ENCODE measurements at regions of chr17 and their contacts with region 1.

Region 1: DNA sequence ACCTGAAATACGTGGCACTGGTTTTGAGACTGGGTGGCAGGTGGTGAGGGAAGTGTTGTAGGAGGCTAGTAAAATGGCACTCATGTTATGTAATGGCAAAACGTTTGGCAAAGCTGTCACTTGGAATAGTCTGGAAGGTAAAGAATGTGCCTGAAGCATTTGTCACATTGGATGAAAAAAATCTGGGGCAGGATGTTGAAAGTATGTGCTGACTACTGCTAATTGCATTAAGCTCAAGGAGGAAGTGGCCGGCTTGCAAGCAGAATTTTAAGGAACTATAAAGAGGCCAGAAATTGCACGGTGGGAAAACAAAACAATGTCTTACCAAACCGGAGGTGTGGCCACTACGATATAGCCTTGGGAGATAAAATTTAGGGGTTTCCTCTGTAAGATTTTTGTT is 26.6 kb upstream of the NLRP1 start:
- DNase-seq: no peak
- ATAC-seq: no peak
- H3K4me3 ChIP-seq: no peak overlapping the region
- H3K27ac ChIP-seq: no peak overlapping the region
- H3K4me1 ChIP-seq: no peaks in the 10 kb centered on the region
- H3K27me3 ChIP-seq: no peaks in the 10 kb centered on the region
- CTCF ChIP-seq: no peak
- EP300 ChIP-seq: no peak
- POLR2A ChIP-seq: no peak
- RAD21 ChIP-seq: no peak

Region 2: GRCh38 chr17:5405400-5405799 is 205.6 kb before region 1 on chr17:
- CTCF ChIA-PET with region 1: no interaction called
- POLR2A ChIA-PET with region 1: no interaction called
- in situ Hi-C with region 1: no loop called
- intact Hi-C with region 1: no loop called
- DNase-seq: no peak
- ATAC-seq: no peak
- H3K4me3 ChIP-seq: no peak overlapping the region
- H3K27ac ChIP-seq: no peak overlapping the region
- H3K4me1 ChIP-seq: no peaks in the 10 kb centered on the region
- H3K27me3 ChIP-seq: no peaks in the 10 kb centered on the region
- CTCF ChIP-seq: no peak
- EP300 ChIP-seq: no peak
- POLR2A ChIP-seq: no peak
- RAD21 ChIP-seq: no peak

Region 3: DNA sequence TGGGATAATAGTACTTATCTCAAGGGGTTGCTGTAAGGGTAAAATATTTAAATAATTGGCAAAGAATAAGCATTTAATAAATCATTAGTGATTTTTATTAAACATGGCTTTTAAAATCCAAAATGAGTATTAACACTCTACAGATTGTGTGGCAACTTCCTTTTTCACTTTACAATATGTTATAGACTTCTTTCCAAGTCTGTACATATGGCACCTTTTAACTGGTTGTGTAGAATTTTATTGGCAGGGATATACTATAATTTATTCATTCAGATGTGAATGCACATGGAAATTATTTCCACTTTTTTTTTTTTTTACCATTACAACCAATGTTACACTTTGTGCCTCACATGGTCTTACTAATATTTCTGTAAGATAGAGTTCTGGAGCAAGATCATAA is 10.9 kb before region 1 on chr17:
- CTCF ChIA-PET with region 1: no interaction called
- POLR2A ChIA-PET with region 1: interaction called, 23 read pairs
- in situ Hi-C with region 1: no loop called
- intact Hi-C with region 1: no loop called
- DNase-seq: no peak
- ATAC-seq: no peak
- H3K4me3 ChIP-seq: no peak overlapping the region
- H3K27ac ChIP-seq: no peak overlapping the region
- H3K4me1 ChIP-seq: no peaks in the 10 kb centered on the region
- H3K27me3 ChIP-seq: no peaks in the 10 kb centered on the region
- CTCF ChIP-seq: no peak
- EP300 ChIP-seq: no peak
- POLR2A ChIP-seq: no peak
- RAD21 ChIP-seq: no peak

Region 4: DNA sequence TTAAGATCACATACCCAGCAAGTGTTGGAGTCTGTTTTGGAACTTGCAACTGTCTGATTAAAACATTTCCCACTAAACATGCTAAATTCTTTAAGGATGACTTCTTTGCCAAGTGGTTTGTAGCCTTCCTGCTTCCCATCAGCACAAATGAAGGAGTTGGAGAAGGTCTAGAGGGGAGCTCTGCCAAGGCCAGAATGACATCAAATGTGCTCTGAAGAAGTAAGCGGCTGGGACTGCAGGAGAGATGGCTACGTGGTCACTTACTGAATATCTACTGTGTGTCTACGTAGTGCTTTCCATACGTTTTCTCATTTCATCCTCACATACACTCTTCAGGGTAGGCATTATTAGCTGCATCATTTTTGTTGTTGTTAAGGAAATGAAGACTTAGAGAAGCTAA is 109.0 kb after region 1 on chr17:
- CTCF ChIA-PET with region 1: no interaction called
- POLR2A ChIA-PET with region 1: no interaction called
- in situ Hi-C with region 1: no loop called
- intact Hi-C with region 1: no loop called
- DNase-seq: no peak
- ATAC-seq: no peak
- H3K4me3 ChIP-seq: no peak overlapping the region
- H3K27ac ChIP-seq: no peak overlapping the region
- H3K4me1 ChIP-seq: no peaks in the 10 kb centered on the region
- H3K27me3 ChIP-seq: peaks cover 0 to 16% of the 10 kb centered on the region in 2 experiments; a peak in 3 of 5 replicates
- CTCF ChIP-seq: no peak
- EP300 ChIP-seq: no peak
- POLR2A ChIP-seq: no peak
- RAD21 ChIP-seq: no peak

Measured in K562 (cell line).